ENCODE measurements at regions of chr19 and their contacts with region 1.

Region 1: GRCh38 chr19:36132489-36132891 is 7.4 kb upstream of the CAPNS1 start:
- DNase-seq: no peak
- ATAC-seq: peak; percentile 50
- H3K4me3 ChIP-seq: no peak overlapping the region
- H3K4me3 Mint-ChIP-seq: peak overlapping the region in 2 of 10 donors; percentile 12 to 29
- H3K27ac ChIP-seq: no peak overlapping the region
- H3K27ac Mint-ChIP-seq: peak overlapping the region in 1 of 9 donors; percentile 80
- H3K4me1 ChIP-seq: no peaks in the 10 kb centered on the region
- H3K4me1 Mint-ChIP-seq: peaks cover 0 to 34% (median 5%) of the 10 kb centered on the region in 7 donors
- H3K27me3 ChIP-seq: no peaks in the 10 kb centered on the region
- H3K27me3 Mint-ChIP-seq: no peaks in the 10 kb centered on the region

Region 2: DNA sequence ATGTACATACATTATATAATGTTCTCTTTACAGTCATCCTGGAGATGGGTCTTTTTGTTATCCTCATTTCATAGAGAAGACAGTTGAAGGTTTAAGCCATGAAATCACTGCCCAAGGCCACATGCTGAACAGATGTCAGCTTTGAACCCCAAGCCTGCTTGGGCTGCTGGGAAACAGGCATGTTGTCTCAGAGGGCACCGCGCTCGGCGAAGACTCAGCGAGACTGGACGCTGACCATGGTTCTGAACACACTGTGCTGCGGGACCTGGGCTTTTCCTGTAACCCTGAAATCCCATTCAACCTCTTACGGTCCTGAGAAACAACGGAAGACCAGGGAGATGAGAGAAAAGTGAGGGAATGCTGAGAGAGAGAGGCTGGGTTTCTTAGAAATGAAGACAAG is 169.0 kb before region 1 on chr19:
- CTCF ChIA-PET with region 1: interaction called, 4 read pairs
- POLR2A ChIA-PET with region 1: no interaction called
- intact Hi-C with region 1: loop called in 1 of 2 experiments (anchors 2 kb)
- DNase-seq: peak in 7 of 9 donors; percentile 26 to 57 (median 47)
- ATAC-seq: no peak
- H3K4me3 ChIP-seq: no peak overlapping the region
- H3K4me3 Mint-ChIP-seq: no peak overlapping the region
- H3K27ac ChIP-seq: no peak overlapping the region
- H3K27ac Mint-ChIP-seq: no peak overlapping the region
- H3K4me1 ChIP-seq: peaks cover 10 to 11% of the 10 kb centered on the region in 2 donors
- H3K4me1 Mint-ChIP-seq: peaks cover 0 to 15% (median 9%) of the 10 kb centered on the region in 7 donors
- H3K27me3 ChIP-seq: no peaks in the 10 kb centered on the region
- H3K27me3 Mint-ChIP-seq: peaks cover 0 to 30% (median 0%) of the 10 kb centered on the region in 5 donors

Region 3: GRCh38 chr19:36114763-36115452 is 17.6 kb before region 1 on chr19 and contains the start of gene POLR2I:
- CTCF ChIA-PET with region 1: interaction called, 10 read pairs
- POLR2A ChIA-PET with region 1: interaction called, 16 read pairs
- intact Hi-C with region 1: loop called (anchors 1 kb)
- DNase-seq: peak; percentile 95 to 100 (median 99)
- ATAC-seq: peak; percentile 92
- H3K4me3 ChIP-seq: peak within 1 kb of the TSS; percentile 97
- H3K4me3 Mint-ChIP-seq: peak within 1 kb of the TSS; percentile 89 to 98 (median 96)
- H3K27ac ChIP-seq: peak within 1 kb of the TSS; percentile 90
- H3K27ac Mint-ChIP-seq: peak within 1 kb of the TSS; percentile 97 to 99 (median 98)
- H3K4me1 ChIP-seq: peaks cover 14 to 15% of the 10 kb centered on the region in 2 donors
- H3K4me1 Mint-ChIP-seq: peaks cover 27 to 54% (median 42%) of the 10 kb centered on the region in 7 donors
- H3K27me3 ChIP-seq: no peaks in the 10 kb centered on the region
- H3K27me3 Mint-ChIP-seq: peaks cover 0 to 5% (median 0%) of the 10 kb centered on the region in 5 donors
- total RNA-seq, gene POLR2I: 20.9 to 56.7 (median 44.7) TPM

Region 4: DNA sequence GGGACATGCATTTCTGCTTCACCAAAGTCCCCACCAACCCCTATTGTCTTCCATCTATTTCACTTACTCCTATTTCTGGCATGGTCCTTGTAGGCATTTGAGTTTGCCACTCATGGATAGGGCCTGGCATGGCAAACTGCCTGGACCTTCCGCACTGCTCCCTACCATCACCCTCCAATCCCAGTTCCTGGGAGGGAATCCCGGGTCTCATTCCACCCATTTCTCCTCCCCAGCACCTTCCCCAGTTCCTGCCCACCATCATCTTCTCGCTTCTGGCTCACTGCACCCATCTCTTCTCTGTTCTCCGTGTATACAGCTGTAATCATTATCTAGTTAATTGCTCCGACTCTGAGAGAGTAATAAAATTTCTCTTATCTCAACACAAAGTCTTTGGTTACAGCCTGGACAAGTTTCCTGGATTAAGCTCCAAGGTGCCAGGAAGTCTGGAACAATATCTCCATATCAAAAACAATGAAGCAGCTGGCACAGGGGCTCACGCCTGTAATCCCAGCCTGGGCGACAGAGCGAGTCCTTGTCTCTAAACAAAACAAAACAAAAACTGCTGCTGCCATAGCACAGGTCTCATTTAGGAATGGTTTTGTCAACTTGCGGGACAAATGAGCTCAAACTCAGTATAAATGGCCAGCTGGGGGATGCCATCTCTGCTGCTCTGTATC is 36.7 kb after region 1 on chr19:
- CTCF ChIA-PET with region 1: interaction called, 100 read pairs
- POLR2A ChIA-PET with region 1: interaction called, 13 read pairs
- intact Hi-C with region 1: loop called (anchors 1 kb)
- DNase-seq: no peak
- ATAC-seq: no peak
- H3K4me3 ChIP-seq: no peak overlapping the region
- H3K4me3 Mint-ChIP-seq: no peak overlapping the region
- H3K27ac ChIP-seq: no peak overlapping the region
- H3K27ac Mint-ChIP-seq: peak overlapping the region in 2 of 9 donors; percentile 6 to 18
- H3K4me1 ChIP-seq: no peaks in the 10 kb centered on the region
- H3K4me1 Mint-ChIP-seq: peaks cover 0 to 5% (median 0%) of the 10 kb centered on the region in 7 donors
- H3K27me3 ChIP-seq: no peaks in the 10 kb centered on the region
- H3K27me3 Mint-ChIP-seq: no peaks in the 10 kb centered on the region

Region 5: GRCh38 chr19:36418287-36419001 is 286.0 kb after region 1 on chr19 and contains the start of gene ZFP82:
- CTCF ChIA-PET with region 1: no interaction called
- POLR2A ChIA-PET with region 1: no interaction called
- intact Hi-C with region 1: loop called in 1 of 2 experiments (anchors 5 kb)
- DNase-seq: peak; percentile 47 to 83 (median 76)
- ATAC-seq: peak; percentile 94
- H3K4me3 ChIP-seq: peak within 1 kb of the TSS; percentile 82
- H3K4me3 Mint-ChIP-seq: peak within 1 kb of the TSS; percentile 89 to 96 (median 93)
- H3K27ac ChIP-seq: peak within 1 kb of the TSS; percentile 83
- H3K27ac Mint-ChIP-seq: peak within 1 kb of the TSS; percentile 82 to 95 (median 91)
- H3K4me1 ChIP-seq: peaks cover 6 to 13% of the 10 kb centered on the region in 2 donors
- H3K4me1 Mint-ChIP-seq: peaks cover 10 to 36% (median 21%) of the 10 kb centered on the region in 7 donors
- H3K27me3 ChIP-seq: peaks cover 0 to 9% of the 10 kb centered on the region in 2 donors
- H3K27me3 Mint-ChIP-seq: peaks cover 14 to 23% (median 22%) of the 10 kb centered on the region in 5 donors
- total RNA-seq, gene ZFP82: 2.2 to 8.2 (median 5.7) TPM

Measured in naive thymus-derived CD4-positive, alpha-beta T cell (primary cell).